Panc1 (cell line): ENCODE measurements at regions of chr17 and their contacts with region 1.

Region 1: GRCh38 chr17:61543786-61544415 is 47.1 kb downstream of the NACA2 start:
- DNase-seq: no peak
- ATAC-seq: no peak
- H3K4me3 ChIP-seq: no peak overlapping the region
- H3K27ac ChIP-seq: no peak overlapping the region
- H3K4me1 ChIP-seq: no peaks in the 10 kb centered on the region
- H3K27me3 ChIP-seq: peaks cover 2% of the 10 kb centered on the region; the same call in 1 of the 2 replicates
- CTCF ChIP-seq: no peak

Region 2: DNA sequence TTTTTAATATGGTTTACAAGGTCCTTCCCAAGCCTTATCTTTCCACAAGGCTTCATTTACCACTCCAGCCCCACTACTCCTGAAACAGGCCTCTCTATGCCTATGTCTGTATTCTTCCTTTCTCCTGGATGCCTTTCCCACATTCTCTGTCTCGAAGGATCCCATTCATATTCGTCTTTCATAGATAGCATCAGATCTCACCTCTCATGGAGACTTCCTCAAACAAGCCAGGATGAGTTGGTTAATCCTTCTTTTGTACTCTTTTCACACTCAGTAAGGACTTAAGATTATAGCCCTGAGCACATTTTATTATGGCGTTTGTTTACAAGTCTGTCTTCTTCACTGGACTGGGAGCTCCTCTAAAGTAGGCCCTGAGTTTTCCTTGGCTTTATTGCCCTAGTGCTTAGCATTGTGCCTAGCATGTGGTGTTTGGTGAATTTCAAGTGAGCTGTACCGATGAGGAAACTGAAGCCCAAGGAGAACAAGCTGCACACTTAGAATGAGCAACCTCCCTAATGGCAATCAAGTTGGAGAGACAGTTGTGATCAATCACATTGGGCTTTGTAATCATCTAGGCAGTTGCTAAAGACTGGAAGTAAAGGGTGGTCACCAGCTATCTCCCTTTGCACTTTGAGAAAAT is 101.6 kb before region 1 on chr17:
- CTCF ChIA-PET with region 1: no interaction called
- POLR2A ChIA-PET with region 1: interaction called, 21 read pairs
- in situ Hi-C with region 1: no loop called
- intact Hi-C with region 1: no loop called
- DNase-seq: no peak
- ATAC-seq: no peak
- H3K4me3 ChIP-seq: no peak overlapping the region
- H3K27ac ChIP-seq: no peak overlapping the region
- H3K4me1 ChIP-seq: no peaks in the 10 kb centered on the region
- H3K27me3 ChIP-seq: no peaks in the 10 kb centered on the region
- CTCF ChIP-seq: no peak

Region 3: GRCh38 chr17:61475398-61476113 is 68.3 kb before region 1 on chr17:
- CTCF ChIA-PET with region 1: no interaction called
- POLR2A ChIA-PET with region 1: no interaction called
- in situ Hi-C with region 1: no loop called
- intact Hi-C with region 1: no loop called
- DNase-seq: no peak
- ATAC-seq: no peak
- H3K4me3 ChIP-seq: no peak overlapping the region
- H3K27ac ChIP-seq: no peak overlapping the region
- H3K4me1 ChIP-seq: no peaks in the 10 kb centered on the region
- H3K27me3 ChIP-seq: no peaks in the 10 kb centered on the region; the same call in 1 of the 2 replicates
- CTCF ChIP-seq: no peak

Region 4: GRCh38 chr17:62351176-62351575 is 807.3 kb after region 1 on chr17:
- CTCF ChIA-PET with region 1: no interaction called
- POLR2A ChIA-PET with region 1: interaction called, 10 read pairs
- in situ Hi-C with region 1: no loop called
- intact Hi-C with region 1: no loop called
- DNase-seq: no peak
- ATAC-seq: no peak
- H3K4me3 ChIP-seq: no peak overlapping the region
- H3K27ac ChIP-seq: no peak overlapping the region
- H3K4me1 ChIP-seq: no peaks in the 10 kb centered on the region
- H3K27me3 ChIP-seq: peaks cover 11% of the 10 kb centered on the region
- CTCF ChIP-seq: no peak